Right ventricle myocardium inferior (tissue), 1 donor: ENCODE measurements at regions of chr1 and their contacts with region 1.

Region 1: DNA sequence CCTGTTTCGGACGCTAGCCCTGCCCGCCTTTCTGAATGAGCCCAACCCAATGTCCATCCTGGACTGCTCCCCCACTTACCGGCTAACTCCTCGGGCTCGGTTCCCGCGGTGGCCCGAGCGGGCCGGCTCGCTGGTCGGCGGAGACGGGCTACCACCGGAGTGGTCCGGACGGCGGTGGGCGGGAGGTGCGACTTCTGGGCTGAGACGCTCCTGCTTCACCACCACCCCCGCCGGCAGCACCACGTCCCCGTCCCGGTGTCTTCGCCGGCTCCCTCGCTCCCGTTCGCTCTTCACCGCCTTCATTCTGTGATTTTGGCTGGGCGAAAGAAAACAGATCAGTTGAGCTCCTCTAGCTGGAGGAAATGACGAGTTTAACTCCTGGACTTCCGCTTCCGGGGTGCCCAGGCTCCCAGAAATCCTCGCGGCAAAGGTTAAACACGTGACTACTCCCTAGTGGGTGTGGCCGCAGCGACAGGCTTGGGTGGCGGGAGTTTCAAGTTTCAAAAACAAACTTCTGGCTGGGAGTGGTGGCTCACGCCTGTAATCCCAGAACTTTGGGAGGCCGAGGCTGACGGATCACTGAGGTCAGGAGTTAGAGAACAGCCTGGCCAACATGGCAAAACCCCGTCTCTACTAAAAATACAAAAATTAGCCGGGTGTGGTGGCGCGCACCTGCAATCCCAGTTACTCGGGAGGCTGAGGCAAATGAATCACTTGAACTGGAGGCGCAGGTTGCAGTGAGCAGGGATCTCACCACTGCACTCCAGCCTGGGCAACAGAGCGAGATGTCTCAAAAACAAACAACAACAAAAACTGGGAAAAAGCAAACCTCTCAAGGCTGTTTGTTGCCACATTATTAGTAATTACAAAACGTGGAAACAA is at the start of gene SNIP1:
- DNase-seq: peak; percentile 94
- ATAC-seq: peak; percentile 93
- total RNA-seq, gene SNIP1: 11.8 TPM

Region 2: DNA sequence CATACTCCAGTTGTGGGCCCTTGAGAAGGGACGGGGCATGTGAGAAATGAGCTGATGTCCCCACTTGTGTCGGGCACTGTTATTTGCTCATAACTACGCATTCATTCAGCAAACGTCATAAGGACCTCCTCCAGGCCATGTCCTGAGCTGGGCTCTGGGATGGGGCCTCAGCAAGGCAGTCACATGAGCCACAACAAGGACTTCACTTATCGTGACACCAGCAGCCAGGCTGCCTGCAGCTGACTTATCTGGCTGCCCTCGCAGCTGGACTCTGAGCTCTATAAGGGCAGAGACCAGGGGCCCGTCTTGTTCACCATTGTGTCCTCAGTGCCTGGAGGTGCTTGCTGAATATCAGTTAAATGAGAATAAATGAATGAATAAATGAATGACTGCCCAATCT is 482.3 kb before region 1 on chr1:
- intact Hi-C with region 1: no loop called
- DNase-seq: no peak
- ATAC-seq: peak; percentile 76

Region 3: DNA sequence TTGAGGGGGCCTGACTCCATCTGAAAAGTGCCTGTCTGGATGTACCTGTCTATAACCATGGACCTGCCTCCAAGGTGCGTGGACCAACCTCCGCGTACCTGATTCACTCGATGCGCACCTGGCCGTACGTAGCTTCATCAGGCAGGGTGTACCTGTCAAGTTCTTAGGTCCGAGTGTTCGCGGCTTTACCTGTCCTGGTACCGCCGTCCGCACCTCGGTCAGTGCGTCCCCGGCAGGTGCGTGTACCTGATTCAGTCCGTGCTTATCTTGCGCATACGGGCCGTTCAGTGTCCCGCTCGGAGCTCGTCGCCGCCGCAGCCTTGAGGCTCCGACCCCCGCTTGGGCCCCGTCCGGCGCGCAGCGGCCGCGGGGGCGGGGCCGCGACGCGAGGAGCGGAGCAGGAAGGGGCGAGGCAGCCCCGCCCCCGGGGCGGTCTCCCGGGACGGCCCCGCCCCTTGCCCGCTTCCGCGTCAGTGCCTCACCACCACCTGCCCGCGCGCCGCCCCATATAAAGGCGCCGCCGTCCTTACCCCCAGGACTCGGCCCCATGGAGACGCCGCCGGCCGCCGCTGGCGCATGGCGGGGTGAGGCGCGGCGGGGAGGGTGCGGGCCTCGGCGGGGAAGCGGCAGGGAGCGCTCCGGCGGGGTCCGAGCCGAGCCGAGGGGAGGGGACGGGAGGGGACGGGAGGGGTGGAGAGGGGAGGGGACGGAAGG is 80.0 kb before region 1 on chr1 and contains the start of gene ZC3H12A:
- intact Hi-C with region 1: loop called (anchors 10 kb)
- DNase-seq: peak; percentile 97
- ATAC-seq: peak; percentile 90
- total RNA-seq, gene ZC3H12A: 4.3 TPM

Region 4: DNA sequence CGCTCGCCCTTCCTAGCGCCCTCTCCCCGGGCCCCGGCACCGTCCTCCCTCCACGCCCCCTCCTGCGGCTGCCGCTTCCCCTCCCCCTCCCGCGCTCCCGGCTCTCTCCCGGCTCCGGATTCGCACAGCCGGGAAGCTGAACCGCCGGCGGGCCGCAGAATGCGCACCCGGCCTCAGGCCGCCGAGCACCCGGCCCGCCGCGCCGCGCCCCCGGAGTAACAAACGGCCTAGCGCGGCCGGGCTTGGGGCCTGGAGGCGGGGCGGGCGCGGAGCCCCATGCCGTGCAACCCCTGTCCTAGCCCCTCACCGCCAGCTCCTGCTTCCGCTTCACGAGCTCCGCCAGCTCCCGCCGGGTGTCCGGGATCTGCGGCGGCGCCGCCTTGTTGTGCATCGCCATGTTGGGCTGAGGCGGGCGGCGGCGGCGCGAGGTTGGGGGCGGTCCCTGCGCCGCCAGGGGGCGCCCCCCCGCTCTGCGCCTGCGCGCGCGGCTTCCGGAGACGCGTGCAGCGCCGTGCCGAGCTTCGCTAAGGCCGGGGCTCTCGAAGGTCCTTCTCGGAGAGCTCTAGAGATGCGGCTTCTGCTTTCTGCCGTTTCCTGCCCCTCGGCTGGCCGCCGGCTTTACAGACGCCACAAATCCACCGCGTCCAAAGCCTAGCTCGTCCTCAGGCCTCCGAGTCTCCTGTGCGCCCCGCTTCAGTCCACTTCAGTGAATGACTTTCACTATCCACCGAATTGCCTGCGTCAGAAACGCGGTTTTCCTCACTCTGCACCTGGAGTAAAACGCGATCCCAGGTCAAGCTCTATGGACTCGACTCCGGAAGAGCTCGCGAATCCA is 39.6 kb before region 1 on chr1 and contains the start of gene MEAF6:
- intact Hi-C with region 1: loop called (anchors 5 kb)
- DNase-seq: peak; percentile 94
- ATAC-seq: peak; percentile 99
- total RNA-seq, gene MEAF6: 35.9 TPM

Region 5: DNA sequence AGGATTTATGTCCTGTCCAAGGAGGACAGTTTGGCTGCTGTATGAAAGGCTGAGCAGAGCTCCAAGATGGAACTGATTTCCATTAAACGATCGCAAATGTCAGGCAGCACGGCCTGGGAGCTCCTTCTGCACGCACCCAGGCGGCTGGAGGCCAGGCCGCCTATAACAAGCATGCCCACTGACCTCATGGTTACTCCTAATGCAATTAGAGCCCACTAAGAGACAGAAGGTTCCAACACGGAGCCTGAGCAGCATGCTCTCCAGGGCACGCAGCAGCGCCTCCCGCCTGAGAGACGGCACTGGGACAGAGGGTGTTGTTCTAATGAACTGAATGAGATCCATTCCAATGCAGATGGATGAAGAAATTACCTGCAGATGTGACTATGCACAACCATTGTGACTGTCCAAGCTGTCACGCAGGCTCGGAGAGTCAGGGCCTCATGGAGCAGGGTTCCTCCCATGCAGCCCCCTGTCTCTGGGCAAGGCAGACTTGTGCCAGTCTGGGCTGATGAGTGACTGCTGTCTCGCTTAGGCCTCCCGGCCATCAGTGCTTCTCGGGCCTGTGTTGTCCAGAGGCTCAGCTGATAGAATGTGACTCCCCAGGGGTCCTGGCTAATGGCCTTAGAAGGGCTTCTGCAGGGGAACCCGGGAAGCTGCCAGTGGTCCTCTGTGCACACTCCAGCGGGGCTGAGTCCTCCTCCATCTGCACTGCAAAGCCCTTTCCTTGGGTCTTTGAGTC is 113.0 kb after region 1 on chr1:
- intact Hi-C with region 1: no loop called
- DNase-seq: no peak
- ATAC-seq: no peak